ENCODE measurements at regions of chr9 and their contacts with region 1.

Region 1: DNA sequence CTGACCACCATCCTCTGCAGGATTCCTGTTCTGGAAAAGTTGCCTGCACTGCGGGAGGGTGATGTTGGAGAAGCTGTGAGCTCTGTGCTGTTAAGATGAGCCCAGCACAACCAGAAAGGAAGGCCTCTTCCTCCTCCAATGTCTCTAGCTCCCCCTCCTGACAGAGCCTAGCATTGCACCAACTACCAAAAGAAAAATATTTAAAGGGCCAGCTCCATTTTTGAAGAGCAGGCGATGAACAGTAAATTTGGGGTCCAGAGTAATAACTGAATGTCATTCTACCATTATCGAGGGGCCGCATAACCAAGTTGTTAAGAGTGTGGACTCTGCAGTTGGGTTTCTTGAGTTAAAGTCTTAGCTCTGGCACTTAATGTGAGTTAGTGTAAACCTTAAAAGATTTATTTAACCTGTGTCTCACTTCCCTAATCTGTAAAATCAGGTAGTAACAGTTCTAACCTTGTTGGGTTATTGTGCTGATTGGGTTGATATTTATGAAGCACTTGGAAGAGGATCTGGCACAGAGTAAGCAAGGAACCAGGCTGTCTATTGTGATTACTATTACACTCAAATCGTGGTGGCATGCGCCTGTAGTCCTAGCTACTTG is 3.9 kb downstream of the TEX53 start:
- DNase-seq: no peak
- H3K4me3 ChIP-seq: no peak overlapping the region
- CTCF ChIP-seq: peak; percentile 82

Region 2: DNA sequence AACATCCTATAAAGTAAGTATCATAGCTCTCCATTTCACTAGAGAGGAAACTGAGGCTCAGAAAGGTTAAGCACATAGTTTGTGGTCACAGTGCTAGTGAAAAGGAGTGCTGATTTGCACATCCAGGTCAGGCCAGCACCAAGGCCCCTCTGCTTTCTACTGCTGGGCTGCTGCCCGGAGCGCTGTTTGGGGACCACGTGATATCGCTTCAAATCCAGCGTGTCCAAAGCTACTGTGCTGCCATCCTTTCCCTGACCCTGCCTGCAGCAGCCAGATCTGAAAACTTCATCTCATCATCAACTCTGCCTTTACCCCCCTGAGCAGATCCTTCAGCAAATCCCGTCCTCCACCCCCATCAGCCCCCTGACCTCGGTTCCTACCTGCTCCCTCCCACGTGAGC is 225.2 kb before region 1 on chr9:
- CTCF ChIA-PET with region 1: interaction called, 367 read pairs
- POLR2A ChIA-PET with region 1: no interaction called
- DNase-seq: no peak
- H3K4me3 ChIP-seq: no peak overlapping the region
- CTCF ChIP-seq: no peak

Region 3: DNA sequence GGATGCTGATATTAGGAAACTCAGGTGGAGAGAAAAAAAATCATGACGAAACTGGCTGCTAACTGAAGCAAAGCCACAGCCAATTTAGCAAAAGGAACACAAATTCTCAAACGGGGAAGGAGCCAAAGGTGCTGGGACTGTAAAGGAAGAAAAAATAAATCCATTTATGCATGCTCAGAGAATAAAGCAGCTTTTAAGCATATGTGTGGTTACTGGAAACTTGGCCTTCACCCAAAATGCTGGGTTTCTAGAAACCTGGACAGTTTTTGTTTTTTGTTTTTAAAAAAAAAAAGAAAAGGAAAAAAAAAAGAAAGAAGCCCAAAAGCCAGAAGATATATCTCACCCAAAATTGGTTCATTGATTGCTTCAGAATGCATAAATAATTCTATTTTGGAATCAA is 156.4 kb before region 1 on chr9:
- CTCF ChIA-PET with region 1: interaction called, 31 read pairs
- POLR2A ChIA-PET with region 1: no interaction called
- DNase-seq: no peak
- H3K4me3 ChIP-seq: no peak overlapping the region
- CTCF ChIP-seq: no peak

Region 4: GRCh38 chr9:114616653-114617520 is 36.8 kb before region 1 on chr9:
- CTCF ChIA-PET with region 1: interaction called, 10 read pairs
- POLR2A ChIA-PET with region 1: no interaction called
- DNase-seq: no peak
- H3K4me3 ChIP-seq: no peak overlapping the region
- CTCF ChIP-seq: no peak

Region 5: GRCh38 chr9:114681594-114682332 is 28.1 kb after region 1 on chr9 and contains the start of gene TEX48:
- CTCF ChIA-PET with region 1: interaction called, 19 read pairs
- POLR2A ChIA-PET with region 1: no interaction called
- DNase-seq: no peak
- H3K4me3 ChIP-seq: no peak within 1 kb of the TSS
- CTCF ChIP-seq: peak; percentile 74

Region 6: DNA sequence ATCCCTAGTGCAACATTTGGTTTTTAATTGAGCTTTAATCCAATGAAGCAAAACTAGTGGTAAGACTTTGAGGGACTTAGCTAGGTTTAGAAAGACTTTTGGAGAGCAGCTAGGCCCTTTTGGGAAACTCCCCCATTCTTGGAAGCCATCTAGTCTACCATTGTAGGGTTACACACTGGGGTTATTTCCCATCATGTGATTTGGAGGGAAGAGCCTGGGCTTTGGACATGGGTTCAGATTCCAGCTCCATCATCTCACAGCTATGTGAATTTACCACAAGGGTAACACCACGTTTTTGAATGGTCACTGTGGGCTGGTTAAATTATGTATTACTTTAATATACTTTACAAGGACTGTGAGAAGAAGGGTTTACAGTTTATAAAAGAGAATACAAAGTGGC is 170.5 kb after region 1 on chr9:
- CTCF ChIA-PET with region 1: no interaction called
- POLR2A ChIA-PET with region 1: no interaction called
- DNase-seq: no peak
- H3K4me3 ChIP-seq: no peak overlapping the region
- CTCF ChIP-seq: no peak